Heart left ventricle (tissue), 16 donors: ENCODE measurements at regions of chr6 and their contacts with region 1.

Region 1: GRCh38 chr6:35370124-35370741 is 27.9 kb downstream of the PPARD start:
- DNase-seq: peak; percentile 76 to 93 (median 79)
- ATAC-seq: peak; percentile 71 to 98 (median 96)
- H3K4me3 ChIP-seq: peak overlapping the region in 1 of 12 donors; percentile 17
- H3K27ac ChIP-seq: peak overlapping the region in 8 of 12 donors; percentile 8 to 81 (median 26)
- H3K4me1 ChIP-seq: peaks cover 0 to 47% (median 23%) of the 10 kb centered on the region in 12 donors
- H3K27me3 ChIP-seq: no peaks in the 10 kb centered on the region
- CTCF ChIP-seq: no peak
- POLR2A ChIP-seq: no peak

Region 2: DNA sequence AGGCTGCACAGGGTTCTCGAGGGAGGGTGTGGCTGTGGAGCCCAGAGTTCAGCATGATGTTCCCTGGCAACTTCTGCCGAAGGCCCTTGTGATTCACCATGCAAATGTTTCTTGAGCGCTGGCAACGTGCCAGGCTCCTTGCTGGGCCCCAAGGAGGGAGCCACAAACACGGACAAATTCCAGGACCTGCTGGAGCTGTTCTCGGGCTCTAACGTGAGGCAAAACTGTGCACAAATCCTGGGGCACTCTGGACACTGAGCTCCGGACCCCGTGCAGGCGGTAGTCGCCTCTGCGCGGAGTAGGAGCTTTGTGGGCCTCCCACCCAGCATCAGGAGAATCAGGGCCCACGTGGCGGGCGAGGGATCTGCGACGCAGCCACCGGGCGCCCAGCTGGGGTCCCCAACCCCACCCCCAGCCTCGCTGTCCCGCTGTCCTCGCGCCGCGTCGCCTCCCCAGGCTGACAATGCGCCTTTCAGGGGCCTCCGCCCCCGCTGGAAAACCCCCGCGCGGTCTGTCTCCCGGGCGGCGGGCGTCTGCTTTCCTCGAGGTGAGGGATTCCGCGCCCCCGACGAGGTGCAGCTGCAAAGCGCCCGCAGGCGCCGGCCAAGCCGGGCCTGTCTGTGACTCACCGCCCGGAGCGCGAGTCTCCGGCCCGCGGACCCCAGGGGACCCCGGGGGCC is 188.2 kb before region 1 on chr6:
- intact Hi-C with region 1: no loop called
- DNase-seq: peak in 4 of 5 donors; percentile 27 to 78 (median 71)
- ATAC-seq: peak in 2 of 4 donors; percentile 56 to 64
- H3K4me3 ChIP-seq: no peak overlapping the region
- H3K27ac ChIP-seq: peak overlapping the region in 10 of 12 donors; percentile 35 to 79 (median 53)
- H3K4me1 ChIP-seq: peaks cover 0 to 60% (median 26%) of the 10 kb centered on the region in 12 donors
- H3K27me3 ChIP-seq: peaks cover 0 to 12% (median 0%) of the 10 kb centered on the region in 9 donors
- CTCF ChIP-seq: no peak
- POLR2A ChIP-seq: no peak

Region 3: DNA sequence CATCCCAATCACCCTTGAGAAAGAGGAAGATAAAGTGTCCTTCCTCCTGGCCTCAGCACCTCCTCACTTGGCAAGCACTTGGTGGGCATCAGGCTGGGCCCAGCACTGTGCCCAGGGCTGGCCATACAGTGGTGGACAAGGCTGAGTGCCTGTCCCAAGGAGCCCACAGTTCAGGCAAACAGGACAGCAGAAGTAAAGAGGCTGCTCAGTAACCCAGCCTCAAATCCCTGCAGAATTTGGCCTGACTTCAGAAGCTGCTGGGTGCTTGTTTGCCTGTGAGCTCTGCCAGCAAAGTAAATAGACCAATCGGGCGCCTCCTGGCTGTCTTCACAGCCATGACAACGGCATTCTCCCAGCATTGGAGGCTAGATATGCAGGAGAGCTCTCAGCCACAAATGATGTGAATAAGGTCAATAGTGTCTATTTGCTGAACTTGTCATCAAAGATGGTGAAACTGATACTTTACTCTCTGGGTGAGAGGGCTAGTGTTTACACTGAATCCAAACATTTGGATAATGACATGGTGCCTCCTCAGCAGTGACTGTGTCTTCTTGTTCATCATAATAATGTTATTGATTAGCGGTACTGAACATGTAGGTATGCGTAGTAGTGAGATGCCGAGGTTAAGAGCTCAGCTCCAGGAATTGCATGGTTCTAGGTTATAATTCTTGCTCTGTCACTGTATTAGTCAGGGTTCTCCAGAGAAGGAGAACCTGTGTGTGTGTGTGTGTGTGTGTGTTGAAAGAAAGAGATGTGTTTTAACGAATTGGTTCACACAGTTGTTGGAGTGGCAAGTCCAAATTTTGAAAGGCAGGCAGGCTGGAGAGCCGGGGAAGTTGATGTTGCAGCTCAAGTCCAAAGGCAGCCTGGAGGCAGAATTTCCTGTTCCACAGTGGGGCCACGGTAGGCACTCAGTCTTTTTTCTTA is 45.1 kb after region 1 on chr6:
- intact Hi-C with region 1: loop called in 1 of 10 experiments (anchors 5 kb)
- DNase-seq: peak in 4 of 5 donors; percentile 68 to 77 (median 74)
- ATAC-seq: peak; percentile 80 to 93 (median 88)
- H3K4me3 ChIP-seq: no peak overlapping the region
- H3K27ac ChIP-seq: peak overlapping the region in 1 of 12 donors; percentile 19
- H3K4me1 ChIP-seq: peaks cover 0 to 30% (median 10%) of the 10 kb centered on the region in 12 donors
- H3K27me3 ChIP-seq: no peaks in the 10 kb centered on the region
- CTCF ChIP-seq: peak; percentile 26 to 74 (median 58)
- POLR2A ChIP-seq: no peak

Region 4: DNA sequence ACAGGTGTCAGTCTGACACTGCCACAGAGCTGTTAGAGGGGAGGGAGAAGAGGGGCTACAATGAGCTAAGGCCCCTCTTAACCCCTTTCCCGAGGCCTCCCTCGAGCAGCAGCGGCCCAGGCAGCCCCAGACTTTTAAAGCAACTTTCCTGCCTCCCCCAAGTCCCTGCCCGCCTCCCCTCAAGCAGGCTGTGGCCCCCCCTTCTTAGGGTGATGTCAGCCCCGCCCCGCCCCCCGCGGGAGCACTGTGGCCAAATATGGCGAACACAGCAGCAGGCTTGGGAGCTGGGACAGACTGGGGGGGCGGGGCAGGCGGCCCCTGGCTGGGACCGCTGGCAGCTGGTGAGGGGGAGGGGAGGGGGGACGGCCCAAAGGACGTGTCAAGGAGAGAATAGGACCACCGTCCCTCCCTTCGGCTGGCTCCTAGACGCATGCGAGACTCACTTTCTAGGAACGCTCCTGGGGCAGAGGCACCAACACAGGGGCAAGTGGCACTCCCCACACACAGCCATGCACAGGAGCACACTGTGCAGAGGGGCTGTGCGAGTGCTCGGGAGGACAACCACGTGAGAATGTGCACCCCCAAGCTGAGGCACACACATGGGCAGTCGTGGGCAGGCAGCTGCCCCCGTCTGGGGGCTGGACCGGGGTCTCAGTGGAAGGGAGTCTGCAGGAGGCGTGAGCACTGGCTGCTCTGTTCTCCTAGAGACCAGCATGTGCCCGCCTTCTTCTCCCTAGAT is 119.9 kb after region 1 on chr6:
- intact Hi-C with region 1: no loop called
- DNase-seq: peak; percentile 89 to 94 (median 92)
- ATAC-seq: peak; percentile 71 to 85 (median 74)
- H3K4me3 ChIP-seq: peak overlapping the region in 10 of 12 donors; percentile 3 to 49 (median 36)
- H3K27ac ChIP-seq: peak overlapping the region; percentile 18 to 100 (median 89)
- H3K4me1 ChIP-seq: peaks cover 0 to 92% (median 61%) of the 10 kb centered on the region in 12 donors
- H3K27me3 ChIP-seq: peaks cover 0 to 11% (median 0%) of the 10 kb centered on the region in 9 donors
- CTCF ChIP-seq: no peak
- POLR2A ChIP-seq: no peak